Activated CD4-positive, alpha-beta T cell treated with anti-CD3 and anti-CD28 coated beads for 36 hours (primary cell): ENCODE measurements at regions of chr2 and their contacts with region 1.

Region 1: GRCh38 chr2:234544659-234545611 is 48.1 kb upstream of the ARL4C start:
- DNase-seq: peak; percentile 86
- ATAC-seq: peak; percentile 96
- H3K4me3 Mint-ChIP-seq: no peak overlapping the region
- H3K27ac Mint-ChIP-seq: no peak overlapping the region
- H3K4me1 Mint-ChIP-seq: no peaks in the 10 kb centered on the region
- H3K27me3 Mint-ChIP-seq: peaks cover 10% of the 10 kb centered on the region

Region 2: GRCh38 chr2:233976690-233977294 is 568.1 kb before region 1 on chr2:
- CTCF ChIA-PET with region 1: interaction called, 3 read pairs
- POLR2A ChIA-PET with region 1: no interaction called
- intact Hi-C with region 1: loop called (anchors 1 to 2 kb)
- DNase-seq: no peak
- ATAC-seq: no peak
- H3K4me3 Mint-ChIP-seq: no peak overlapping the region
- H3K27ac Mint-ChIP-seq: no peak overlapping the region
- H3K4me1 Mint-ChIP-seq: peaks cover 22% of the 10 kb centered on the region
- H3K27me3 Mint-ChIP-seq: no peaks in the 10 kb centered on the region

Region 3: DNA sequence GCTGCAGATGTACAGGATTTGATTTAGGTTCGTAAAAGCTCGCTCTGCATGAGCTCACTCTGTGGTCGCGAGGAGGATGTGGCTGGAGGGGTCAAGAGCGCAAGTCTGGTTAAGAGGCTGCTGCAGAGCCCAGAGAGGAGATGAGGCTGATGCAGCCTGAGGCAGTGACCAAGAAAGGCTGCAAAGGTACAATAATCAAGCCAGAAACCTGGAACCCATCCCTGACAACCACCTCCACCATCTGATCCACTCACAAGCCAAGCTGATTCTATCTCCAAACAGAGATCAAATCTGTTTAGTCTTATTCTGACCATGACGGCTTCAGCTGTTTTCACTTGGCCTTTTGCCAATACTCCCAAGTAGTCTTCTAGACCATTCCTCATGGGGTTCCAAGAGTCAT is 10.8 kb after region 1 on chr2:
- CTCF ChIA-PET with region 1: interaction called, 12 read pairs
- POLR2A ChIA-PET with region 1: interaction called, 4 read pairs
- intact Hi-C with region 1: no loop called
- DNase-seq: no peak
- ATAC-seq: no peak
- H3K4me3 Mint-ChIP-seq: no peak overlapping the region
- H3K27ac Mint-ChIP-seq: no peak overlapping the region
- H3K4me1 Mint-ChIP-seq: no peaks in the 10 kb centered on the region
- H3K27me3 Mint-ChIP-seq: peaks cover 7% of the 10 kb centered on the region

Region 4: DNA sequence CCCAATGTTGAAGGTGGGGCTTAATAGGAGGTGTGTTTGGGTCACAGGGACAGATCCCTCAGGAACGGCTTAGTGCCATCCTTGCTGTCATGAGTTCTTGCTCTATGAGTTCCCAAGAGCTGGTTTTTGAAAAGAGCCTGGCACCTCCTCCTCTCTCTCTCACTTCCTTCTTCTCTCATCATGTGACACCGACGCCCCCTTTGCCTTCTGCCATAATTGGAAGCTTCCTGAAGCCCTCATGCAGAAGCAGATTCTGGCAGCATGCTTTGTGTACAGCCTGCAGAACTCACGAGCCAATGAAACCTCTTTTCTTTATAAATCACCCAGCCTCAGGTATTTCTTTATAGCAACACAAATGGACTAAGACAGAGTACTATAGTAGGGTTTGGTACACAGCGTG is 306.5 kb after region 1 on chr2:
- CTCF ChIA-PET with region 1: no interaction called
- POLR2A ChIA-PET with region 1: no interaction called
- intact Hi-C with region 1: no loop called
- DNase-seq: no peak
- ATAC-seq: no peak
- H3K4me3 Mint-ChIP-seq: no peak overlapping the region
- H3K27ac Mint-ChIP-seq: no peak overlapping the region
- H3K4me1 Mint-ChIP-seq: no peaks in the 10 kb centered on the region
- H3K27me3 Mint-ChIP-seq: peaks cover 12% of the 10 kb centered on the region

Region 5: GRCh38 chr2:234863043-234863934 is 318.4 kb after region 1 on chr2:
- CTCF ChIA-PET with region 1: no interaction called
- POLR2A ChIA-PET with region 1: no interaction called
- intact Hi-C with region 1: no loop called
- DNase-seq: no peak
- ATAC-seq: no peak
- H3K4me3 Mint-ChIP-seq: no peak overlapping the region
- H3K27ac Mint-ChIP-seq: no peak overlapping the region
- H3K4me1 Mint-ChIP-seq: no peaks in the 10 kb centered on the region
- H3K27me3 Mint-ChIP-seq: peaks cover 3% of the 10 kb centered on the region

Region 6: GRCh38 chr2:235116885-235117492 is 572.1 kb after region 1 on chr2:
- CTCF ChIA-PET with region 1: interaction called, 11 read pairs
- POLR2A ChIA-PET with region 1: no interaction called
- intact Hi-C with region 1: loop called (anchors 1 kb)
- DNase-seq: no peak
- ATAC-seq: no peak
- H3K4me3 Mint-ChIP-seq: no peak overlapping the region
- H3K27ac Mint-ChIP-seq: no peak overlapping the region
- H3K4me1 Mint-ChIP-seq: no peaks in the 10 kb centered on the region
- H3K27me3 Mint-ChIP-seq: peaks cover 20% of the 10 kb centered on the region